ENCODE measurements at regions of chr4 and their contacts with region 1.

Region 1: DNA sequence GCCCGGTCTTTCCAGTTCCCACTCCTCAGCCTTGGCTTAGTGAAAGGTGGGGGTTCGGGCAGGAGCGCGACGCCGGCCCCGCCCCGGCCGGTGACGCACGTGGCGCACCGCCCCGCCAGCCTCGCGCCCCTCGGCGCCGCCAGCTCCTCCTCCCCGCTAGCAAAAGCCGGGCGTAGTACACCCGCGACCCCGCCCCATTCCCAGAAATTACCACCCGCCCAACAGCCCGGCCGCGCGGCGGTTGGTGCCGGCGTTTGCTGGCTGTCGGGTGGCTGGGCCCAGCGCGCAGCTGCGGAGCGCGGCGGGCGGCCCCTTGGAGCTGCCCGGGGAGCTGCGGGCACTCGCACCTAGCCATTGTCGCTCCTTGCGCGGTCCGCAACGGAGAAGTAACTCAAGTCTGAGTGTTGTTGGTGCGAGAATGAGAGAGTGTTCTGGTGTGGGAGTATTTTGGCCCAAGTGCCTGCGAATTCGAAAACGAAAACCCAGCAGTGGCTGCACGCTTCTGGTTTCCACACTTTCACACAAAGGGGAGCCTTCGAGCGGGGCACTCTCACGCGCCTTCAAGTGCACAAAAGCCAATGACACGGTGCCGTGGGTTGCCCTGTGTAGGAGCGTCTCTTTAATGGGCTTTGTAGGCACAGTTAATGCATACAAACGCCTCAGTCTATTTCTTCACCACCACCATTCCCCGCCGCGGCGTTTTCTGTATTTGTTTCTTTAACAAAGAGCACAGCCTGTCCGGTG is 1.0 kb upstream of the ELF2 start:
- DNase-seq: peak; percentile 84 to 98 (median 92)
- ATAC-seq: peak; percentile 84
- H3K4me3 ChIP-seq: peak overlapping the region; percentile 71
- H3K4me3 Mint-ChIP-seq: peak overlapping the region; percentile 86 to 95 (median 91)
- H3K27ac ChIP-seq: peak overlapping the region; percentile 86
- H3K27ac Mint-ChIP-seq: peak overlapping the region; percentile 90 to 97 (median 94)
- H3K4me1 ChIP-seq: peaks cover 0 to 11% of the 10 kb centered on the region in 2 donors
- H3K4me1 Mint-ChIP-seq: peaks cover 0 to 31% (median 17%) of the 10 kb centered on the region in 7 donors
- H3K27me3 ChIP-seq: no peaks in the 10 kb centered on the region
- H3K27me3 Mint-ChIP-seq: peaks cover 0 to 44% (median 0%) of the 10 kb centered on the region in 5 donors

Region 2: GRCh38 chr4:138242076-138242833 is 935.8 kb before region 1 on chr4 and contains the start of gene SLC7A11:
- CTCF ChIA-PET with region 1: no interaction called
- POLR2A ChIA-PET with region 1: no interaction called
- intact Hi-C with region 1: loop called in 1 of 2 experiments (anchors 10 kb)
- DNase-seq: peak in 8 of 9 donors; percentile 13 to 61 (median 42)
- ATAC-seq: peak; percentile 94
- H3K4me3 ChIP-seq: peak within 1 kb of the TSS; percentile 35
- H3K4me3 Mint-ChIP-seq: peak within 1 kb of the TSS; percentile 70 to 97 (median 83)
- H3K27ac ChIP-seq: no peak within 1 kb of the TSS
- H3K27ac Mint-ChIP-seq: peak within 1 kb of the TSS; percentile 9 to 96 (median 64)
- H3K4me1 ChIP-seq: peaks cover 0 to 3% of the 10 kb centered on the region in 2 donors
- H3K4me1 Mint-ChIP-seq: peaks cover 0 to 36% (median 21%) of the 10 kb centered on the region in 7 donors
- H3K27me3 ChIP-seq: no peaks in the 10 kb centered on the region
- H3K27me3 Mint-ChIP-seq: no peaks in the 10 kb centered on the region
- total RNA-seq, gene SLC7A11: 0.21 to 2.8 (median 0.54) TPM

Region 3: GRCh38 chr4:139030614-139031235 is 147.3 kb before region 1 on chr4:
- CTCF ChIA-PET with region 1: interaction called, 5 read pairs
- POLR2A ChIA-PET with region 1: no interaction called
- intact Hi-C with region 1: loop called (anchors 1 to 5 kb)
- DNase-seq: peak; percentile 45 to 81 (median 74)
- ATAC-seq: peak; percentile 86
- H3K4me3 ChIP-seq: no peak overlapping the region
- H3K4me3 Mint-ChIP-seq: peak overlapping the region in 5 of 10 donors; percentile 3 to 58 (median 18)
- H3K27ac ChIP-seq: no peak overlapping the region
- H3K27ac Mint-ChIP-seq: peak overlapping the region in 2 of 9 donors; percentile 0 to 1
- H3K4me1 ChIP-seq: no peaks in the 10 kb centered on the region
- H3K4me1 Mint-ChIP-seq: peaks cover 5 to 20% (median 11%) of the 10 kb centered on the region in 7 donors
- H3K27me3 ChIP-seq: no peaks in the 10 kb centered on the region
- H3K27me3 Mint-ChIP-seq: no peaks in the 10 kb centered on the region

Region 4: GRCh38 chr4:139099366-139099982 is 78.6 kb before region 1 on chr4:
- CTCF ChIA-PET with region 1: no interaction called
- POLR2A ChIA-PET with region 1: no interaction called
- intact Hi-C with region 1: loop called (anchors 1 kb)
- DNase-seq: peak; percentile 37 to 81 (median 71)
- ATAC-seq: peak; percentile 94
- H3K4me3 ChIP-seq: no peak overlapping the region
- H3K4me3 Mint-ChIP-seq: no peak overlapping the region
- H3K27ac ChIP-seq: no peak overlapping the region
- H3K27ac Mint-ChIP-seq: no peak overlapping the region
- H3K4me1 ChIP-seq: no peaks in the 10 kb centered on the region
- H3K4me1 Mint-ChIP-seq: peaks cover 0 to 6% (median 0%) of the 10 kb centered on the region in 7 donors
- H3K27me3 ChIP-seq: no peaks in the 10 kb centered on the region
- H3K27me3 Mint-ChIP-seq: no peaks in the 10 kb centered on the region

Region 5: DNA sequence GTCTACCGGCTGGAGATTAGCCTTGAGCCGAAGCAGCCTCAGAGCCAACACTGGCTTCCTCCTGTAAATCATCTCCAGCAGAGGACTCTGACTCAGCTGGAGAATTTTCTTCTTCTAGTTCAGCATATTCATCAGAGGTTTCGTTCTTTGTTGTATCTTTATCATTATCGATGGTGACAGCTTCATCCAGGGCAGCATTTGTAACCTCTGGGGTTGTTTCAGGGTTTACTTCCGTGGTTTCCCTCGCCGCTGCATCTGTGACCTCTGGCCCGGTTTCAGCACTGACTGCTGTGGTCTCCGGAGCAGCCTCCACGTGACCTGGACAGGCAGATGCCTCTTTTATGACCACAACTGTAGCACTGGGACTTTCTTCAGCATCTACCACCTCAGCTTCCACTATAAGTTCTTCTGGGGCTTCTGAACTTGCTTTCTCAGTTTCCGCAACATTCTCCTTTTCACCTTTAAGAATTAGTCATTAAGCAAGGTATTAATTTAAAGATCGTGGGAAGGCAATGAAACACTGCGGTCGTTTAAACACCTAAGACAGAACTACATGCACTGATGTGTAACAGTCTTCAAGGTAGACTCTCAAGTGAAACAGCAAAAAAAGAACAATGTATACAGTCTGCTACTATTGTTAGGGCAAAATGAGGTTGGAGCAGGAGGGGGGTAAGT is 88.7 kb after region 1 on chr4:
- CTCF ChIA-PET with region 1: no interaction called
- POLR2A ChIA-PET with region 1: no interaction called
- intact Hi-C with region 1: loop called in 1 of 2 experiments (anchors 1 kb)
- DNase-seq: peak in 8 of 9 donors; percentile 14 to 72 (median 20)
- ATAC-seq: peak; percentile 96
- H3K4me3 ChIP-seq: peak overlapping the region; percentile 42
- H3K4me3 Mint-ChIP-seq: peak overlapping the region; percentile 58 to 93 (median 84)
- H3K27ac ChIP-seq: no peak overlapping the region
- H3K27ac Mint-ChIP-seq: peak overlapping the region in 8 of 9 donors; percentile 4 to 86 (median 50)
- H3K4me1 ChIP-seq: peaks cover 12 to 14% of the 10 kb centered on the region in 2 donors
- H3K4me1 Mint-ChIP-seq: peaks cover 9 to 20% (median 14%) of the 10 kb centered on the region in 7 donors
- H3K27me3 ChIP-seq: no peaks in the 10 kb centered on the region
- H3K27me3 Mint-ChIP-seq: peaks cover 0 to 18% (median 0%) of the 10 kb centered on the region in 5 donors

Region 6: GRCh38 chr4:139301113-139301820 is 123.2 kb after region 1 on chr4 and contains the start of gene NAA15:
- CTCF ChIA-PET with region 1: interaction called, 4 read pairs
- POLR2A ChIA-PET with region 1: interaction called, 20 read pairs
- intact Hi-C with region 1: loop called (anchors 1 kb)
- DNase-seq: peak; percentile 88 to 99 (median 97)
- ATAC-seq: peak; percentile 95
- H3K4me3 ChIP-seq: peak within 1 kb of the TSS; percentile 83
- H3K4me3 Mint-ChIP-seq: peak within 1 kb of the TSS; percentile 96 to 100 (median 100)
- H3K27ac ChIP-seq: peak within 1 kb of the TSS; percentile 92
- H3K27ac Mint-ChIP-seq: peak within 1 kb of the TSS; percentile 97 to 100 (median 99)
- H3K4me1 ChIP-seq: peaks cover 22 to 28% of the 10 kb centered on the region in 2 donors
- H3K4me1 Mint-ChIP-seq: peaks cover 17 to 76% (median 58%) of the 10 kb centered on the region in 7 donors
- H3K27me3 ChIP-seq: no peaks in the 10 kb centered on the region
- H3K27me3 Mint-ChIP-seq: no peaks in the 10 kb centered on the region
- total RNA-seq, gene NAA15: 41.2 to 67.4 (median 49.0) TPM

Region 7: GRCh38 chr4:140095694-140096482 is 917.8 kb after region 1 on chr4:
- CTCF ChIA-PET with region 1: no interaction called
- POLR2A ChIA-PET with region 1: no interaction called
- intact Hi-C with region 1: loop called in 1 of 2 experiments (anchors 10 kb)
- DNase-seq: peak in 8 of 9 donors; percentile 46 to 92 (median 71)
- ATAC-seq: peak; percentile 73
- H3K4me3 ChIP-seq: peak overlapping the region; percentile 39
- H3K4me3 Mint-ChIP-seq: peak overlapping the region; percentile 68 to 97 (median 88)
- H3K27ac ChIP-seq: peak overlapping the region; percentile 73
- H3K27ac Mint-ChIP-seq: peak overlapping the region; percentile 90 to 99 (median 95)
- H3K4me1 ChIP-seq: peaks cover 5 to 53% of the 10 kb centered on the region in 2 donors
- H3K4me1 Mint-ChIP-seq: peaks cover 51 to 83% (median 75%) of the 10 kb centered on the region in 7 donors
- H3K27me3 ChIP-seq: no peaks in the 10 kb centered on the region
- H3K27me3 Mint-ChIP-seq: peaks cover 0 to 2% (median 0%) of the 10 kb centered on the region in 5 donors